CD8-positive, alpha-beta memory T cell (primary cell): ENCODE measurements at regions of chr6 and their contacts with region 1.

Region 1: GRCh38 chr6:31366693-31367470 is 9.9 kb upstream of the HLA-B start:
- DNase-seq: peak; percentile 83 to 92 (median 85)
- H3K4me3 ChIP-seq: peak overlapping the region; percentile 63
- H3K4me3 Mint-ChIP-seq: peak overlapping the region; percentile 66 to 88 (median 83)
- H3K27ac ChIP-seq: no peak overlapping the region
- H3K27ac Mint-ChIP-seq: peak overlapping the region in 7 of 8 donors; percentile 21 to 93 (median 78)
- H3K4me1 ChIP-seq: no peaks in the 10 kb centered on the region
- H3K4me1 Mint-ChIP-seq: peaks cover 12 to 22% (median 15%) of the 10 kb centered on the region in 3 donors
- H3K27me3 ChIP-seq: peaks cover 10% of the 10 kb centered on the region
- H3K27me3 Mint-ChIP-seq: peaks cover 17 to 35% of the 10 kb centered on the region in 2 donors

Region 2: GRCh38 chr6:31139599-31139998 is 227.3 kb before region 1 on chr6:
- CTCF ChIA-PET with region 1: interaction called, 80 read pairs
- POLR2A ChIA-PET with region 1: interaction called, 3 read pairs
- DNase-seq: no peak
- H3K4me3 ChIP-seq: no peak overlapping the region
- H3K4me3 Mint-ChIP-seq: no peak overlapping the region
- H3K27ac ChIP-seq: no peak overlapping the region
- H3K27ac Mint-ChIP-seq: peak overlapping the region in 1 of 8 donors; percentile 41
- H3K4me1 ChIP-seq: peaks cover 5% of the 10 kb centered on the region
- H3K4me1 Mint-ChIP-seq: peaks cover 4 to 6% (median 5%) of the 10 kb centered on the region in 3 donors
- H3K27me3 ChIP-seq: no peaks in the 10 kb centered on the region
- H3K27me3 Mint-ChIP-seq: no peaks in the 10 kb centered on the region

Region 3: DNA sequence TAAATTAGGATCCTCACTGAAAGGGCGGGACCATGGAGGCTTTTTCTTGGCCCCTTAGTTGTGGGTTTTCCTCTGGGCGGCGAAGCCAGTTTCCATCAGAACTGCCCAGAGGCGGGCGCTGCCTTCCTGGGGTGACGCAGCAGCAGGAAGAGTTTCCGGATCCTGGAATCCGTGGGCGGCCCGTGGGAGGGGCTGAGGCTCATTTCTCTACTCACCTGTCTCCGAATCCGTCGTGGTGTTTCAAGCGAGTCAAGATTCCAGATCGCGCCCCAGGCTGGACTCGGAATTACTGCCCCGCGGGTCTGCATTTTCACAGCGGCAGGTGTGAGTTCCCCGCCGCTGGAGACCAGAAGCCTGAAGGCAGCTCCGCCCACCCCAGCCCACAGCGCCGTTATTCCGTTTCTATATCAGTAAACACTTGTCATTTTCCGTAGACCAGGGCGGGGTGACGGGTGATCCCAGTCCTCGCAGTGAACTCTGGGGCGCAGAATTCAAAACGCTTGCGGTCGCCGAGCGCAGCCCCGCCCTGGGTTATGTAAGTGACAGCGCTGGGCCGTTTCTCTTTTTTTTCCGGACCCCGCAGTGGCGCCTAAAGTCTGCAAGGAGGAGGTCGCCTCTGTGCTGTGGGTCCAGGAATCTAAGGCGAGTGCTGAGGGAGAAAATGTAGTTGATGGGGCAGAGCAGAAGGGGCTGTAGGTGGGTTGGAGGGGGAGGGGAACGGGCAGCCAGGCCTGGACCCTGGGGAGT is 169.2 kb before region 1 on chr6:
- CTCF ChIA-PET with region 1: interaction called, 72 read pairs
- POLR2A ChIA-PET with region 1: interaction called, 24 read pairs
- DNase-seq: peak; percentile 92 to 98 (median 95)
- H3K4me3 ChIP-seq: peak overlapping the region; percentile 80
- H3K4me3 Mint-ChIP-seq: peak overlapping the region; percentile 80 to 98 (median 87)
- H3K27ac ChIP-seq: peak overlapping the region; percentile 99
- H3K27ac Mint-ChIP-seq: peak overlapping the region; percentile 87 to 100 (median 94)
- H3K4me1 ChIP-seq: peaks cover 49% of the 10 kb centered on the region
- H3K4me1 Mint-ChIP-seq: peaks cover 57 to 74% (median 62%) of the 10 kb centered on the region in 3 donors
- H3K27me3 ChIP-seq: no peaks in the 10 kb centered on the region
- H3K27me3 Mint-ChIP-seq: peaks cover 0 to 3% of the 10 kb centered on the region in 2 donors

Region 4: GRCh38 chr6:31351401-31352309 is 15.2 kb before region 1 on chr6:
- CTCF ChIA-PET with region 1: interaction called, 11 read pairs
- POLR2A ChIA-PET with region 1: interaction called, 6 read pairs
- DNase-seq: peak in 4 of 5 donors; percentile 35 to 74 (median 60)
- H3K4me3 ChIP-seq: no peak overlapping the region
- H3K4me3 Mint-ChIP-seq: peak overlapping the region; percentile 96 to 100 (median 97)
- H3K27ac ChIP-seq: no peak overlapping the region
- H3K27ac Mint-ChIP-seq: peak overlapping the region; percentile 81 to 100 (median 96)
- H3K4me1 ChIP-seq: peaks cover 40% of the 10 kb centered on the region
- H3K4me1 Mint-ChIP-seq: peaks cover 57 to 74% (median 72%) of the 10 kb centered on the region in 3 donors
- H3K27me3 ChIP-seq: no peaks in the 10 kb centered on the region
- H3K27me3 Mint-ChIP-seq: peaks cover 0 to 32% of the 10 kb centered on the region in 2 donors

Region 5: DNA sequence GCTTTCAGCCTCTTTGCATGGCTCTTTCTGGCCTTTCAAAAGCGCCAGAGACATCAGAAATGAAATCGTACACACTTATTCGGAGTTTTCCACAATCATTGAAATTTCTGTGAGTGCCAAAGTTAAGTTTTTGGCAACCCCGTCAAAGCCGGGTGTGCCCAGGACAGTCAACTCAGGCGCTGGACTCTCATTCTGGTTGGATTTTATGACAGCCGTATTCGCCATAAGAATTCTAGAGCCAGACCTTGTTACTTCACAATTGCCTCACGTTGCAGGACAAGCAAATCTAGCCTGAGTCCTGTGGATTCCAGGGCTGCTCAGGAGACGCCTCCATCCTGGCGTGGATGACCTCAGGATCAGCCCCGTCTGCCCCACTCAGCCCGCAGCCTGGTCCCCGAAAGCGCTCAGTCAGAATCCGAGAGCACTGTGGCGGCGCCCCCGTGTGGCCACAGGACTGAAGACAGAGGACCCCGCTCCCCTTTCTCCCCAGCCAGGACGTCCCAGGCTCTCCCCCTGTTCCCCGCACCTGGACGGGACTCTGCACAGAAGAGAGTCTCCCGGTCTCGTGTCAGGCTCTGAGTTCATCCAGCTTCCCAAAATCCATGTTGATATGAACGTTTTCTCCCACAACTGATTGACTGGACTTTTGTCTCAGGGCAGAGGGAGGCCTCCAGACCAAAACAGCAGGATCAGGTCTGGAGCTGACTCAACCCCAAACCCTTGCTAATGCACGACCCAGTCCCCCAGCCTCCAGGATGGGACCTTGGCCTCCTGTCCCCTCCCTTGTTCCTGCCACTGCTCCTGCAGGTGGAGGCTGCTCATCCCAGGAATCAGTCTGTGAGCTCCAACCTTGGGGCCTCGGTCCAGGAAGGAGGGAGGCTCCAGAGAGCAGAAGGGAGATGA is 74.7 kb after region 1 on chr6:
- CTCF ChIA-PET with region 1: interaction called, 10 read pairs
- POLR2A ChIA-PET with region 1: no interaction called
- DNase-seq: peak; percentile 71 to 90 (median 79)
- H3K4me3 ChIP-seq: no peak overlapping the region
- H3K4me3 Mint-ChIP-seq: peak overlapping the region in 1 of 7 donors; percentile 32
- H3K27ac ChIP-seq: no peak overlapping the region
- H3K27ac Mint-ChIP-seq: peak overlapping the region in 1 of 8 donors; percentile 19
- H3K4me1 ChIP-seq: no peaks in the 10 kb centered on the region
- H3K4me1 Mint-ChIP-seq: peaks cover 3 to 7% (median 5%) of the 10 kb centered on the region in 3 donors
- H3K27me3 ChIP-seq: no peaks in the 10 kb centered on the region
- H3K27me3 Mint-ChIP-seq: peaks cover 20 to 54% of the 10 kb centered on the region in 2 donors

Region 6: GRCh38 chr6:31689249-31690110 is 322.6 kb after region 1 on chr6:
- CTCF ChIA-PET with region 1: no interaction called
- POLR2A ChIA-PET with region 1: no interaction called
- DNase-seq: no peak
- H3K4me3 ChIP-seq: no peak overlapping the region
- H3K4me3 Mint-ChIP-seq: no peak overlapping the region
- H3K27ac ChIP-seq: peak overlapping the region; percentile 68
- H3K27ac Mint-ChIP-seq: peak overlapping the region in 5 of 8 donors; percentile 27 to 58 (median 50)
- H3K4me1 ChIP-seq: peaks cover 9% of the 10 kb centered on the region
- H3K4me1 Mint-ChIP-seq: no peaks in the 10 kb centered on the region
- H3K27me3 ChIP-seq: no peaks in the 10 kb centered on the region
- H3K27me3 Mint-ChIP-seq: no peaks in the 10 kb centered on the region